Caco-2 (cell line): ENCODE measurements at regions of chr6 and their contacts with region 1.

Region 1: GRCh38 chr6:113858480-113859348 is 1.6 kb downstream of the MARCKS start:
- DNase-seq: peak; percentile 95 to 96
- H3K4me3 ChIP-seq: peak overlapping the region; percentile 64
- H3K4me3 Mint-ChIP-seq: no peak overlapping the region
- H3K27ac Mint-ChIP-seq: no peak overlapping the region
- H3K4me1 ChIP-seq: peaks cover 3% of the 10 kb centered on the region
- H3K4me1 Mint-ChIP-seq: no peaks in the 10 kb centered on the region
- H3K27me3 ChIP-seq: no peaks in the 10 kb centered on the region
- H3K27me3 Mint-ChIP-seq: no peaks in the 10 kb centered on the region
- CTCF ChIP-seq: peak; percentile 82 to 90

Region 2: GRCh38 chr6:113306552-113307145 is 552.1 kb before region 1 on chr6:
- CTCF ChIA-PET with region 1: interaction called, 13 read pairs
- POLR2A ChIA-PET with region 1: no interaction called
- intact Hi-C with region 1: loop called (anchors 1 kb)
- DNase-seq: peak; percentile 55 to 64
- H3K4me3 ChIP-seq: no peak overlapping the region
- H3K4me3 Mint-ChIP-seq: no peak overlapping the region
- H3K27ac Mint-ChIP-seq: no peak overlapping the region
- H3K4me1 ChIP-seq: peaks cover 6% of the 10 kb centered on the region; the same call in 1 of the 2 replicates
- H3K4me1 Mint-ChIP-seq: peaks cover 7% of the 10 kb centered on the region
- H3K27me3 ChIP-seq: no peaks in the 10 kb centered on the region
- H3K27me3 Mint-ChIP-seq: no peaks in the 10 kb centered on the region
- CTCF ChIP-seq: peak; percentile 64 to 68

Region 3: DNA sequence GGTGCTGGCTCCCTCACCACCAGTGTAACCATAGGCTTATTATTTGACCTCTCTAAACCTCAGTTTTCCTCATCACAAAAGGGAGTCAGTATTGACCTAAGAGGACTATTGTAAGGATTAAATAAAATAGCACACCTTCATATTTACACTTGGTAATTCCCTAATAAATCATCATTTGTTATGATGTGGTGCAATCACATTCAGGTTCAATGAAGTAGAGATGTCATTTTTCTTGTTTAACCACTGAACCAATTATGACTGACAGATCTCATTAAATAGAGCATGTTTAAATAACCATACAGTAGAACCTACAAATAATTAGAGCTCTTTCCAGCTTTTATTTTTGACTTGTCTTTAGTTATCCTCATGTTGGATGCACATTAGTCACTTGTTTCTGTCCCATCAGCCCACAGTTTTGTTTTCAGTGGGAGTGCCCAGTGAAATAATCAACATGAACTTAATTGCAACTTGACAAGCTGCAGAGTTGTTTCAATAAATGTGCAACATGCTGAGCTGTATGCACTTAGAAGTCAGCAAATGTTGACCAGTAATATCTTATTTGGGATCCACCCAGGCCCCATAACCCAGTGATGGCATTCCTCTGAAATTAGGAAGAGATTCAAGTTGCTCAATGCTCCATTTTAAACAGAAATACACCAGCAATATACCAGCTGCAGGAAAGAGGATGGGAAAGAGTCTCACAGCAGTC is 453.2 kb before region 1 on chr6:
- CTCF ChIA-PET with region 1: no interaction called
- POLR2A ChIA-PET with region 1: no interaction called
- intact Hi-C with region 1: no loop called
- DNase-seq: no peak
- H3K4me3 ChIP-seq: no peak overlapping the region
- H3K4me3 Mint-ChIP-seq: no peak overlapping the region
- H3K27ac Mint-ChIP-seq: no peak overlapping the region
- H3K4me1 ChIP-seq: no peaks in the 10 kb centered on the region
- H3K4me1 Mint-ChIP-seq: peaks cover 3% of the 10 kb centered on the region
- H3K27me3 ChIP-seq: no peaks in the 10 kb centered on the region
- H3K27me3 Mint-ChIP-seq: no peaks in the 10 kb centered on the region
- CTCF ChIP-seq: no peak

Region 4: GRCh38 chr6:113433335-113433991 is 425.3 kb before region 1 on chr6:
- CTCF ChIA-PET with region 1: interaction called, 6 read pairs
- POLR2A ChIA-PET with region 1: no interaction called
- intact Hi-C with region 1: loop called (anchors 1 kb)
- DNase-seq: peak; percentile 76 to 78
- H3K4me3 ChIP-seq: no peak overlapping the region
- H3K4me3 Mint-ChIP-seq: peak overlapping the region; percentile 37
- H3K27ac Mint-ChIP-seq: peak overlapping the region; percentile 52
- H3K4me1 ChIP-seq: peaks cover 19% of the 10 kb centered on the region
- H3K4me1 Mint-ChIP-seq: peaks cover 15% of the 10 kb centered on the region
- H3K27me3 ChIP-seq: no peaks in the 10 kb centered on the region
- H3K27me3 Mint-ChIP-seq: no peaks in the 10 kb centered on the region
- CTCF ChIP-seq: no peak

Region 5: DNA sequence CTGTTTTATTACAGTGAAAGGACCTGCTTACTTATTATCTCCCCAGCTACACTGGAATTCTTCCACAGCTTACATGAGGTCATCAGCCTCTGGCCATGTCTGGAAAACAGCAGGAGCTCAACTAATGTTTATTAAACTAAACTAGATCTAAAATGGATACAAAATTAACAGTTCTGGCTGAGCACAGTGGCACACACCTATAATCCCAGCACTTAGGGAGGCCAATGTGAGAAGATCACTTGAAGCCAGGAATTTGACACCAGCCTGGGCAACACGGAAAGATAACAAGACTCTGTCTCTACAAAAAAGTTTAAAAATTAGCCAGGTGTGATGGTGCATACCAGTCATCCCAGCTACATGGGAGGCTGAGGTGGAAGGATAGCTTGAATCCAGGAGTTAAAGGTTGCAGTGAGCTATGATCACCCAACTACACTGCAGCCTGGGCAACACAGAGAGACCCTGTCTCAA is 222.3 kb before region 1 on chr6:
- CTCF ChIA-PET with region 1: interaction called, 5 read pairs
- POLR2A ChIA-PET with region 1: interaction called, 14 read pairs
- intact Hi-C with region 1: no loop called
- DNase-seq: peak; percentile 44 to 59
- H3K4me3 ChIP-seq: no peak overlapping the region
- H3K4me3 Mint-ChIP-seq: peak overlapping the region; percentile 39
- H3K27ac Mint-ChIP-seq: peak overlapping the region; percentile 91
- H3K4me1 ChIP-seq: peaks cover 78% of the 10 kb centered on the region
- H3K4me1 Mint-ChIP-seq: peaks cover 40% of the 10 kb centered on the region
- H3K27me3 ChIP-seq: no peaks in the 10 kb centered on the region
- H3K27me3 Mint-ChIP-seq: no peaks in the 10 kb centered on the region
- CTCF ChIP-seq: no peak

Region 6: DNA sequence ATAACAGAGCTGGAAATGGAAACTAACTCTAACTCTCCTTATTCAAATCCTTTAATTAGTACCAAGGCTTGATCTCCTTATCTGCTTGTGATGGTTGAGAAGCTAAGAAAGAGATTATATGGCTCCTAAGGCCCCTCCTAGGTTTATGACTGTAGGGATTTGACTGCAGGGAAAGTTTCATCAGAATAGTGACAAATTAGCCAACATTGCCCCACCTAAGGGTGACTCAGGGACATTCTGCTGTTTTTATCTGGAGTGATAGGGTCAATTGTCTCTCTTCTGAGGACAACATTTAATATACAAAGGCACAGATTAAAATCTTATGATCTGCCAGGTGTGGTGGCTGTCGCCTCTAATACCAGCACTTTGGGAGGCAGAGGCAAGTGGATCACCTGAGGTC is 139.7 kb before region 1 on chr6:
- CTCF ChIA-PET with region 1: interaction called, 4 read pairs
- POLR2A ChIA-PET with region 1: interaction called, 3 read pairs
- intact Hi-C with region 1: loop called (anchors 2 kb)
- DNase-seq: peak; percentile 68 to 77
- H3K4me3 ChIP-seq: no peak overlapping the region
- H3K4me3 Mint-ChIP-seq: no peak overlapping the region
- H3K27ac Mint-ChIP-seq: peak overlapping the region; percentile 65
- H3K4me1 ChIP-seq: peaks cover 18% of the 10 kb centered on the region
- H3K4me1 Mint-ChIP-seq: peaks cover 25% of the 10 kb centered on the region
- H3K27me3 ChIP-seq: no peaks in the 10 kb centered on the region
- H3K27me3 Mint-ChIP-seq: no peaks in the 10 kb centered on the region
- CTCF ChIP-seq: no peak

Region 7: GRCh38 chr6:113846577-113846976 is 12.1 kb before region 1 on chr6:
- CTCF ChIA-PET with region 1: no interaction called
- POLR2A ChIA-PET with region 1: interaction called, 3 read pairs
- intact Hi-C with region 1: loop called (anchors 1 kb)
- DNase-seq: peak in 1 of 2 experiments; percentile 20
- H3K4me3 ChIP-seq: no peak overlapping the region
- H3K4me3 Mint-ChIP-seq: peak overlapping the region; percentile 57
- H3K27ac Mint-ChIP-seq: peak overlapping the region; percentile 96
- H3K4me1 ChIP-seq: peaks cover 51% of the 10 kb centered on the region
- H3K4me1 Mint-ChIP-seq: peaks cover 35% of the 10 kb centered on the region
- H3K27me3 ChIP-seq: no peaks in the 10 kb centered on the region
- H3K27me3 Mint-ChIP-seq: no peaks in the 10 kb centered on the region
- CTCF ChIP-seq: no peak